PC-3 (cell line): ENCODE measurements at regions of chr9 and their contacts with region 1.

Region 1: DNA sequence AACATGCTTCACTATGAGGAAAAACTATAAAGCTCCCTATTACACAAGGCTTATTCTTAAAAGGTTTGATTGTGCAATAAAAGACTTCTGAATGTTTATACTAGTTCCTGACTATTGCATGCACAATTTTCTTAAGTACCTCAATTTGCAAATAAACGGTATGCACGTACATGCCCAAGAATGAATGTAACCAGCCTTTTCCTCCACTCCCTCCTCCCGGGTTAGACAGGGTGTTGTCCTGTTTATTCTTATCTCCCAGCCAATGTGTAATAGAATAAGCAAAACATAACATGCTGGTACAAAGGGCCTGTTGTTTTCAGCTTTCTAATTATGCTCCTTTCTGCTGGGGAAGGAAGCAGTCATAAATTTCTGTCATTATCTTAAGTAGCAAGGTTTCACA is 79.1 kb downstream of the AOPEP start:
- DNase-seq: peak; percentile 89
- ATAC-seq: peak; percentile 100
- H3K4me3 ChIP-seq: no peak overlapping the region
- H3K27ac ChIP-seq: peak overlapping the region; percentile 97
- H3K4me1 ChIP-seq: peaks cover 28% of the 10 kb centered on the region
- H3K27me3 ChIP-seq: no peaks in the 10 kb centered on the region
- CTCF ChIP-seq: no peak

Region 2: GRCh38 chr9:94726495-94727191 is 78.9 kb before region 1 on chr9 and contains the start of gene AOPEP:
- CTCF ChIA-PET with region 1: no interaction called
- POLR2A ChIA-PET with region 1: interaction called, 12 read pairs
- intact Hi-C with region 1: no loop called
- DNase-seq: peak; percentile 94
- ATAC-seq: peak; percentile 95
- H3K4me3 ChIP-seq: peak within 1 kb of the TSS; percentile 91
- H3K27ac ChIP-seq: peak within 1 kb of the TSS; percentile 35
- H3K4me1 ChIP-seq: peaks cover 8% of the 10 kb centered on the region
- H3K27me3 ChIP-seq: no peaks in the 10 kb centered on the region
- CTCF ChIP-seq: no peak
- total RNA-seq, gene AOPEP: 23.1 and 28.7 TPM in 2 replicates

Region 3: DNA sequence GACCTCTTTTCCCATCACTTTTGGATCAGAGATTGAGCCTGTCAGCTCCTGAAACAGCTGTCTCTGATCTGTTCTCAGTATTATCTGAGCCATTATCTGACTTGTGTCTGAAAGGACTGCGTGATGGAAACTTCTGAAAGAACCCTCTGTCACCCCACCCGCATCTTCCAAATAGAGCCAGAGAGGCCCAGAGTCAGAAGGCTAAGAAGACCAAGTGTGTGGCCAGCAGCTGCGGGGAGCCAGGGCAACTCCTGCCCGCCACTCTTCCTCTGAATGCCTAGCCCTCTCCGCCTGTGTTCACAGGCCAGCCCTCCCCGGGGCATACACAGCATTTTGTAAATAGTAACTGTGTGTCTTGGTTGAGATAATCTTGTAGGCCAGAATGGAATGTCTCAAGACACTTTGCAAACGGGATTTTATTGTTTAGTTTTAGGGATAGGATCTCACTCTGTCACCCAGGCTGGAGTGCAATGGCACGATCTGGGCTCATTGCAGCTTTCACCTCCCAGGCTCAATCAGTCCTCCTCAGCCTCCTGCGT is 13.6 kb after region 1 on chr9:
- CTCF ChIA-PET with region 1: no interaction called
- POLR2A ChIA-PET with region 1: no interaction called
- intact Hi-C with region 1: loop called (anchors 2 kb)
- DNase-seq: peak; percentile 51
- ATAC-seq: no peak
- H3K4me3 ChIP-seq: no peak overlapping the region
- H3K27ac ChIP-seq: peak overlapping the region; percentile 81
- H3K4me1 ChIP-seq: peaks cover 51% of the 10 kb centered on the region
- H3K27me3 ChIP-seq: no peaks in the 10 kb centered on the region
- CTCF ChIP-seq: no peak

Region 4: GRCh38 chr9:94867281-94867841 is 61.8 kb after region 1 on chr9:
- CTCF ChIA-PET with region 1: no interaction called
- POLR2A ChIA-PET with region 1: interaction called, 4 read pairs
- intact Hi-C with region 1: loop called (anchors 1 kb)
- DNase-seq: peak; percentile 79
- ATAC-seq: peak; percentile 48
- H3K4me3 ChIP-seq: peak overlapping the region; percentile 52
- H3K27ac ChIP-seq: peak overlapping the region; percentile 99
- H3K4me1 ChIP-seq: peaks cover 68% of the 10 kb centered on the region
- H3K27me3 ChIP-seq: no peaks in the 10 kb centered on the region
- CTCF ChIP-seq: no peak

Region 5: GRCh38 chr9:94879230-94879629 is 73.6 kb after region 1 on chr9:
- CTCF ChIA-PET with region 1: no interaction called
- POLR2A ChIA-PET with region 1: no interaction called
- intact Hi-C with region 1: no loop called
- DNase-seq: no peak
- ATAC-seq: no peak
- H3K4me3 ChIP-seq: no peak overlapping the region
- H3K27ac ChIP-seq: no peak overlapping the region
- H3K4me1 ChIP-seq: peaks cover under 1% of the 10 kb centered on the region; the same call in 1 of the 2 replicates
- H3K27me3 ChIP-seq: no peaks in the 10 kb centered on the region
- CTCF ChIP-seq: no peak

Region 6: GRCh38 chr9:94912700-94913249 is 107.2 kb after region 1 on chr9:
- CTCF ChIA-PET with region 1: no interaction called
- POLR2A ChIA-PET with region 1: no interaction called
- intact Hi-C with region 1: loop called (anchors 1 kb)
- DNase-seq: peak; percentile 94
- ATAC-seq: peak; percentile 71
- H3K4me3 ChIP-seq: peak overlapping the region; percentile 7
- H3K27ac ChIP-seq: peak overlapping the region; percentile 74
- H3K4me1 ChIP-seq: peaks cover 59% of the 10 kb centered on the region
- H3K27me3 ChIP-seq: no peaks in the 10 kb centered on the region
- CTCF ChIP-seq: no peak

Region 7: DNA sequence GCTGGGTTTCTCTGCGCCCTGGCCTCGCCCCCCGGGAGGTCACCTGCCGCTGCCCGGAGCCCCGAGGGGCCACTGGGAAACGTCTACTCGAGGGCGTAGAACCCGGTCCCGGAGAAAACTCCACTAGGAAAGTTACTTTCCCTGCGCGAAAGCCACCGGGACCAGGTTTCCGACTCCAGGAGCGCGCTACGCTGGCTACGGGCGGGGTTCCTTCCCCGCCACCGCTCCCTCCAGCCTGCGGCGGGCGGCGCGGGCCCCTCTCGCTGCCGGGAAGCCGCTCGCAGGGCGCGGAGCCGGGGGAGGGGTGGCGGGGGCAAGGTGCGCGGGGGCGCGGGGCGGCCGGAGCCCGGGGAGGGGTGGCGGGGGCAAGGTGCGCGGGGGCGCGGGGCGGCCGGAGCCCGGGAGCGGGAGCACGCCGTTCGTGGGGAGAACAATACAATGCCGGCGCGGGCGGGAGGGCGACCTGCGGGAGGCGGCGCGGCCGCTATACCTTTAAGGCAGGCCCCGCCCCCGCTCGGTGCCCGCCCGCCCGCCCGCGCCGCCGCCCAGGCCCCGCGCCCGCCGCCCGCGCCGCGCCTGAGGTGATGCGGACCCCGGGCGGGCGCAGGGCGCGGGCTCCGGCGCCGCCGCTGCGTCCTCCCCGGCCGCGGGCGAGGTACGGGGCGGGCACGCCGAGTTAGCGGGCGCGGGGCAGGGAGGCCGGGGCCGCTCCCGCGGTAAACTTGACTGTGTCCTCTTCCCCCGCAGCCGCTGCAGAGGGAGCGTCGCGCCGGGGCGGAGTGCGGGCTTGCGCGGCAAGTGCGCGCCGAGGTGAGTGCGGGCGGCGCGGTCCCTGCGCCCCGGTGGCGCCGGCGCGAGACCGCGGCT is 199.1 kb after region 1 on chr9:
- CTCF ChIA-PET with region 1: no interaction called
- POLR2A ChIA-PET with region 1: no interaction called
- intact Hi-C with region 1: no loop called
- DNase-seq: peak; percentile 36
- ATAC-seq: peak; percentile 64
- H3K4me3 ChIP-seq: peak overlapping the region; percentile 87
- H3K27ac ChIP-seq: peak overlapping the region; percentile 81
- H3K4me1 ChIP-seq: peaks cover 33% of the 10 kb centered on the region
- H3K27me3 ChIP-seq: no peaks in the 10 kb centered on the region
- CTCF ChIP-seq: no peak

Region 8: GRCh38 chr9:95273369-95274022 is 467.9 kb after region 1 on chr9:
- CTCF ChIA-PET with region 1: no interaction called
- POLR2A ChIA-PET with region 1: no interaction called
- intact Hi-C with region 1: no loop called
- DNase-seq: no peak
- ATAC-seq: no peak
- H3K4me3 ChIP-seq: no peak overlapping the region
- H3K27ac ChIP-seq: no peak overlapping the region
- H3K4me1 ChIP-seq: no peaks in the 10 kb centered on the region
- H3K27me3 ChIP-seq: no peaks in the 10 kb centered on the region
- CTCF ChIP-seq: no peak